K562 (cell line): ENCODE measurements at regions of chr7 and their contacts with region 1.

Region 1: GRCh38 chr7:129224251-129225205 is at the start of gene AHCYL2:
- DNase-seq: peak; percentile 98 to 100 (median 98)
- ATAC-seq: peak; percentile 97
- H3K4me3 ChIP-seq: peak within 1 kb of the TSS; percentile 73
- H3K27ac ChIP-seq: peak within 1 kb of the TSS; percentile 90
- H3K4me1 ChIP-seq: peaks cover 5 to 11% of the 10 kb centered on the region in 2 experiments; a peak in 4 of 5 replicates
- H3K27me3 ChIP-seq: peaks cover 0 to 5% of the 10 kb centered on the region in 2 experiments; a peak in 1 of 5 replicates
- CTCF ChIP-seq: peak in 1 of 3 experiments; percentile 21; a peak in 1 of 6 replicates
- EP300 ChIP-seq: no peak; the same call in 1 of the 2 replicates
- POLR2A ChIP-seq: peak; percentile 78
- RAD21 ChIP-seq: no peak
- polyA plus RNA-seq, gene AHCYL2: 0.93 to 2.0 TPM

Region 2: GRCh38 chr7:129238546-129238945 is 14.0 kb after region 1 on chr7:
- CTCF ChIA-PET with region 1: no interaction called
- POLR2A ChIA-PET with region 1: interaction called, 15 read pairs
- in situ Hi-C with region 1: no loop called
- intact Hi-C with region 1: no loop called
- DNase-seq: no peak
- ATAC-seq: no peak; the same call in 2 of the 3 replicates
- H3K4me3 ChIP-seq: no peak overlapping the region
- H3K27ac ChIP-seq: no peak overlapping the region
- H3K4me1 ChIP-seq: no peaks in the 10 kb centered on the region
- H3K27me3 ChIP-seq: no peaks in the 10 kb centered on the region
- CTCF ChIP-seq: no peak
- EP300 ChIP-seq: no peak
- POLR2A ChIP-seq: no peak
- RAD21 ChIP-seq: no peak

Region 3: DNA sequence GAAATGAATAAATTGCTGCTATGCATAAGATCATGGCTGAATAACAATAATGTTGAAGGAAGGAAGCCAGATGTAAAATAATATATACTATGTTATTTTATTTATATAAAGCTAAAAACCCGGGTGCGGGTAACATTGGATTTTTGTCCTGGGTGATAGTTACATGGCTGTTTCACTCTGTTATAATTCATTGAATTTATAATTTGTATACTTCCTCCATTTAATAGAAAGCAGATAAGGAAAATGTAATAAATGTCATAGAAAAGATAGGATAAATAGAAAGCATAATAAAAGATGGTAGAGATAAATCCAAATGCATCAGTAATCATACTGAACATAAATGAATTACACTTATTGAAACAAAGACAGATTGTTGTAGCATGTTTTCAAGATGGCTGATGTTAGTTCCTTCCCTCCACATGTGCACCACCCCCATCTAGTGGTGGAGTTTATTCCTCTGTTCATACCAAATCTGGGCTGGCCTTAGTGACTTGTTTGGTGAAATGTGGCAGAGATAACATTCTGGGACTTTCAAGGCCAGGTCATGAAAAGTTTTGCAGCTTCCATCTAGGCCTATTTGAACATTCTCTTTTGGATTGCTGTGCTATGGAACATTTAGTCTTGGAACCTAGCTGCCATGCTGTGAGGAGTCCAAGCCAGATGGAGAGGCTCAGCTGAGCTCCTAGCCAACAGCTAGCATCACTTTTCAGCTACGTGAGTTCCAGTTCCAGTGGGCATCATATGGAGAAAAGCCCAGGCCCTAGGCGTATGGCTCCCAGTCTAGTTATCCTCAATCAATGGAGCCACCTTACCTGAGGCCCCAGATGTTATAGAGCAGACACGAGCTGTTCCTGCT is 47.2 kb after region 1 on chr7:
- CTCF ChIA-PET with region 1: interaction called, 17 read pairs
- POLR2A ChIA-PET with region 1: no interaction called
- in situ Hi-C with region 1: no loop called
- intact Hi-C with region 1: loop called (anchors 1 kb)
- DNase-seq: peak; percentile 73 to 83 (median 76)
- ATAC-seq: peak; percentile 99
- H3K4me3 ChIP-seq: no peak overlapping the region
- H3K27ac ChIP-seq: no peak overlapping the region
- H3K4me1 ChIP-seq: no peaks in the 10 kb centered on the region
- H3K27me3 ChIP-seq: no peaks in the 10 kb centered on the region
- CTCF ChIP-seq: peak; percentile 85 to 96 (median 85)
- EP300 ChIP-seq: no peak
- POLR2A ChIP-seq: no peak
- RAD21 ChIP-seq: peak; percentile 61 to 93

Region 4: DNA sequence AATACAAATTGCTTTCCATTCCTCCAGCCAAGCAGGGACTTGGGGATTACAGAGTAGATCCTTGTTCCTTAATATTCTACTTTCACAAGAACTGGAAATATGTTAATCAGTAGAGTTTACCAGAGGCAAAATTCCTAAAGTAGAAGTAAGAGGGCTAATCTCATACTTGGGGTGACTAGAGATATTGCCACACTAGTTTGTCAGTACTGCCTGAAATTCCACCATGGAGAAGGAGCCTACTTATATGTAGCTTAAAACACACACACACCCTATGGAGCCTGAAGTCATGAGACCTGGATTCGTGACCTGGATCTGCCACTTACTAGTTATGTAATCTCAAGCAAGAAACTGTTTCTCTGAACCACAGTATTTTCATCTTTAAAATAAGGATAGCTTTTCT is 243.6 kb after region 1 on chr7:
- CTCF ChIA-PET with region 1: interaction called, 44 read pairs
- POLR2A ChIA-PET with region 1: interaction called, 3 read pairs
- in situ Hi-C with region 1: loop called (anchors 5 kb)
- intact Hi-C with region 1: no loop called
- DNase-seq: no peak
- ATAC-seq: no peak
- H3K4me3 ChIP-seq: no peak overlapping the region
- H3K27ac ChIP-seq: no peak overlapping the region
- H3K4me1 ChIP-seq: no peaks in the 10 kb centered on the region
- H3K27me3 ChIP-seq: no peaks in the 10 kb centered on the region
- CTCF ChIP-seq: no peak
- EP300 ChIP-seq: no peak
- POLR2A ChIP-seq: no peak
- RAD21 ChIP-seq: no peak